ENCODE measurements at regions of chr16 and their contacts with region 1.

Region 1: DNA sequence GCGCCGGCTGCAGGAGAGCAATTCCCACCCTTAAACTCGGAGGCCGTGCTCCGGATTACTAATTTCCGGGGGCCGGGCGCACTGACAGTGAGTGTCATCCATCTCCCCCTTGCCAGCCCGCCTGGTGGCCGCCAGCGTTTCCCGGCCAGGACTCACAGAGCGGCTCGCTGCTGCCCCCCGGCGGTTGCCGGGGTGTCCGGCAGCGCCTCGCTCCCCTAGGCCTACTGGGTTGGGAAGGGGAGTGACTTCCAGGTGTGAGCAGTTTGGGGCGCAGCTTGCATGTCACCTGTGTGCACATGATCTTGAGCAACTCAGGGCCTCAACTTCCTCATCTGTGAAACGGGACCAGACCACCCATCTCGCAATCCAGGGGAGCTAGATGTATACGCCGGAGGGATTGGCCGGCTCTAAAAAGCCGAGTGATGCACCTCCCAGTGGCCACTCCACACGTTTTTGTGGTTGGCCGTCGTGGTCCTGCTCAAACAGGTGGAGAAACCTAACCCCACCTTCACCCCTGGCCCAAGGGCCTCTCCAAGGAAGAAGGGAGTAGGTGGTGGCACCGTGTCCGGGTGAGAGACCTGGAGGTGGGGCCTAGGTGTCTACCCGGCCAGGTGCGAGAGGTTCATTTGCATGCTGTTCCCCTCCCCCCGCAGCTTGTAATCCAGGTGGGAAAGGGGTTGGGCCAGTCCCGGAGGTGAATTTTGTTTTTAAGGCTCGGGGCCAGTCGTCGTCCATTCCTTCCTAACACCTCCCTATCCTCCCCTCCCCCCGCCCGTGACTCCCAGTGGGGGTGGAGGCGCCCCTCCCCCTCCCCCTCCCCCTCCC is 2.4 kb upstream of the GSE1 start:
- DNase-seq: peak in 3 of 4 donors; percentile 88 to 98 (median 89)
- ATAC-seq: peak; percentile 51
- H3K4me3 ChIP-seq: peak overlapping the region; percentile 62 to 63
- H3K27ac ChIP-seq: peak overlapping the region; percentile 89 to 91
- H3K4me1 ChIP-seq: peaks cover 51 to 89% of the 10 kb centered on the region in 2 donors
- H3K27me3 ChIP-seq: no peaks in the 10 kb centered on the region
- CTCF ChIP-seq: peak; percentile 99

Region 2: DNA sequence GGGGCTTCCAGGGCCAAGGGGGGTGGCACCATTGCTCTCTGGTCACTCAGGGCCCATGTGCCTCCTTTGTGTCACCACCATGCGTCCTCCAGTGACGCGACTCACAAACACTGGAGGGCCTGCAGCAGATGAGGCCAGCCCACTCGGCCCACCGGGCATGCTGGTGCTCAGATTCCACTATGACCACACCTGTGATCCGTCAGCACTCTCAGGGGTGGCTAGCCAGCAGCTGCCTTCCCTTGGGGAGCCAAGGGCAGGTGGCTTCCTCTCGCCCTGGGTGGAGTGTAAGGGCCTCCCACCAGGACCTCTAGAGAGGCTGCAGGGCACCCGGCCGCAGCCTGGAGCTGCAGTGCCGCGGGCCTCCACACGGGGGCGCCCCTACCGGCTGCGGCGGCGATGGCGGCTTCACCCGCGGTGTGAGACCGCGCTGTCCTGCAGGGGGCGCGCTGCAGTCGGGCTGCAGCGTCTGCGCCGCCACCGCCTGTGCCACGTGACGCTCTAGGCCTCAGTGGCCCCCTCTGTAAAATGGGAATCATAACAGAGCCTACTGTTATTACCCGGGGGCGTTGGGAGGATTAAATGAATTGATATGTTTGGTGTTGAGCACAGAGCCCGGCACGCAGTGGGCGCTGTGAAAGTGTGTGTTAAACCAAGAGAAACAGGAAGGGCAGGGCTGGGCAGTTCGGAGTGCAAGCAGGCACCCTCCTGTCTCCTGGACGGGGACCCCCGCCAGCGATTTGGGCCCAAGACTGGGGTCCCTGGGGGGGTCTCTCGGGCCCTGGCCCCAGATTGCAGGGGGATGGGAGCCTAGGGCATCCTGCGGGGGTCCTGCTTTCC is 190.0 kb before region 1 on chr16:
- intact Hi-C with region 1: loop called in 1 of 2 experiments (anchors 10 kb)
- DNase-seq: peak in 3 of 4 donors; percentile 60 to 96 (median 60)
- ATAC-seq: peak; percentile 66
- H3K4me3 ChIP-seq: no peak overlapping the region
- H3K27ac ChIP-seq: no peak overlapping the region
- H3K4me1 ChIP-seq: peaks cover 5 to 17% of the 10 kb centered on the region in 2 donors
- H3K27me3 ChIP-seq: no peaks in the 10 kb centered on the region
- CTCF ChIP-seq: peak; percentile 99 to 100

Region 3: DNA sequence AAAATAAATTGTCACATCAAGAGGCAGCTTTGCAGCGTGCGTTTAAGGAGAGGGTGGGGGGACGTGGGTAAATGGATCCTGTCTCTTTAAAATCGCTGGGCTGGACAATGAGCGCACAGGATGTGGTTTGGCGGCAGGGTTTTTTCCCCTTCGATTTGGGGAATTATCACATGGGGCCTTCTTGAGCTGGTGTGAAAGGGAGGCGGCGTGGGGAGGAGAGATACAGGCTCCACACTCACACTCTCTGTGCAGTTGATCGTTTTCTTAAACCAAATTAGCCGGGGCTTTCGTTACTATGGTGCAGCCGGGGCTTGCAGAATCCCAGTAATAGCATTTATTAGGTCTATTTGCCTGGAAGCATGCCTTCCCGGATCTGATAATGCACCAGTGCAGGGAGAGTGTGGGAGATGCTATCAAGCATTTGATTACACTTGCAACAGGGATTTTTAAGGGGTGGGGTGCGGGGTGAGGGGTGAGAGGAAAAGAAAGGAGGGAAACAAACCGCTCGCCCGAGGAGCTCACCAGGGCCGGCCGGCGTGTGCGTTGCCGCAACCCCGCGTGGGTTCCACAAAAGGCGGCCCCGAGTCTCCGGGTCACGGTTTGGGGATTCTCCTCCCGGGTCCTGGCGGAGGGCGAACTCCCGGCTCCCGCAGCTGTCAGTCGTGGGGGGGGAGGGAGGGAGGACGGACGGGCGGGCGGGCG is 56.5 kb before region 1 on chr16:
- intact Hi-C with region 1: loop called in 1 of 2 experiments (anchors 10 kb)
- DNase-seq: peak in 3 of 4 donors; percentile 75 to 89 (median 80)
- ATAC-seq: peak; percentile 57
- H3K4me3 ChIP-seq: peak overlapping the region; percentile 78 to 85
- H3K27ac ChIP-seq: peak overlapping the region; percentile 88 to 98
- H3K4me1 ChIP-seq: peaks cover 10 to 33% of the 10 kb centered on the region in 2 donors
- H3K27me3 ChIP-seq: no peaks in the 10 kb centered on the region
- CTCF ChIP-seq: no peak

Region 4: GRCh38 chr16:85767569-85767968 is 156.8 kb after region 1 on chr16:
- intact Hi-C with region 1: no loop called
- DNase-seq: no peak
- ATAC-seq: peak; percentile 59
- H3K4me3 ChIP-seq: no peak overlapping the region
- H3K27ac ChIP-seq: no peak overlapping the region
- H3K4me1 ChIP-seq: no peaks in the 10 kb centered on the region
- H3K27me3 ChIP-seq: peaks cover 0 to 7% of the 10 kb centered on the region in 2 donors
- CTCF ChIP-seq: no peak

Region 5: GRCh38 chr16:85799497-85800337 is 189.0 kb after region 1 on chr16 and contains the starts of genes COX4I1 and EMC8:
- intact Hi-C with region 1: no loop called
- DNase-seq: peak; percentile 88 to 99 (median 94)
- ATAC-seq: peak; percentile 98
- H3K4me3 ChIP-seq: peak within 1 kb of the TSS; percentile 98
- H3K27ac ChIP-seq: peak within 1 kb of the TSS; percentile 82 to 90
- H3K4me1 ChIP-seq: peaks cover 22 to 36% of the 10 kb centered on the region in 2 donors
- H3K27me3 ChIP-seq: no peaks in the 10 kb centered on the region
- CTCF ChIP-seq: no peak
- polyA plus RNA-seq, gene COX4I1: 272 to 349 (median 295) TPM
- polyA plus RNA-seq, gene EMC8: 20.9 to 29.1 (median 25.3) TPM

Measured in left lung (tissue), 14 donors.